ENCODE measurements at regions of chr16 and their contacts with region 1.

Region 1: DNA sequence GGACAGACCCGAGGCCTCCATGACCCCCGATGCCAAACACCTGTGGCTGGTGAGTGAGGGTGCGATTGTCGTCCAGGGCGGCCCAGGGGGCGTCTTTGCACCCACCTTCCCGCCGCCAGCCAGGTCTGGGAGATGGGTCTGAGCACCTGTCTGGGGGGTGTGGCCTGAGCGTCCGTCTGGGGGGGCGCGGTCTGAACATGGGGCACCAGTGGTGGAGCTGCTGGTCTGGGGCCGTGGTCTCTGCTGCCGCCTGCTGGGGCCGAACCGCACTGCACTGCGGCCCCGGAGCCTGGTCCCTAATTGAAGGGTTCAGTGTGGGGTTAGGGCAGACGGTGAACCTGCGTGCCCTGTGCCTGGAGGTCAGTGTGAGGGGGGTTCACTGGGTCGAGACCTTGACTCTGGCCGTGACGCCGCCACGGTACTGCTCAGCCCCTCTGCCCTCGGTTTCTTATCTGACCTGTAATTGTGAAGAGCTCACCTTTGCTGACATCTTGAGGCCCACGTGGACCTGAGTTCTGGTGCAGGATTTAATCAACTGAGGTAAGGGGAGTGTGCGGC is 12.6 kb upstream of the TCF25 start:
- DNase-seq: peak; percentile 65
- H3K4me3 ChIP-seq: no peak overlapping the region
- H3K27ac ChIP-seq: no peak overlapping the region
- H3K4me1 ChIP-seq: peaks cover 8% of the 10 kb centered on the region
- H3K27me3 ChIP-seq: no peaks in the 10 kb centered on the region
- CTCF ChIP-seq: peak; percentile 78

Region 2: GRCh38 chr16:89708441-89708931 is 152.3 kb before region 1 on chr16:
- intact Hi-C with region 1: loop called (anchors 5 kb)
- DNase-seq: peak; percentile 77
- H3K4me3 ChIP-seq: no peak overlapping the region
- H3K27ac ChIP-seq: no peak overlapping the region
- H3K4me1 ChIP-seq: peaks cover 5% of the 10 kb centered on the region
- H3K27me3 ChIP-seq: no peaks in the 10 kb centered on the region
- CTCF ChIP-seq: no peak

Region 3: DNA sequence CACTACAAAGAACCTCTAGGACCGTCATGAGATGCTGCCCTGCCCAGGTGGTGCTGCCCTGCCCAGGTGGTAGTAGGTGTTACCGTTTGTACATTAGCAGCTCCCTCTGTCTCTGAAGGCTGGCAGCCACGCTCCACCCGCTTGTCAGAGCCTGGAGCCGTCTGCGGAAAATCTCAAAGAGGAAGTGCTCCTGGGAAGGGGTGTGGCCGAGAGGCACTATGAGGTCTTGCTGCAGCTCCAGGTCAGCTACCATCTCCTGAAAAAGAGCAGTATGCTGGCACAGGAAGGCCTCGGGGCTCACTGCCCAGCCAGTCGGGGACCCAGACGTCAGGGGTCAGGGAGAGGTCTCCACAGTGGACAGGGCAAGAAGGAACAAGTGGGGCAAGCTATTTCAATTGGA is 111.2 kb before region 1 on chr16:
- intact Hi-C with region 1: loop called (anchors 5 kb)
- DNase-seq: peak; percentile 60
- H3K4me3 ChIP-seq: no peak overlapping the region
- H3K27ac ChIP-seq: no peak overlapping the region
- H3K4me1 ChIP-seq: no peaks in the 10 kb centered on the region
- H3K27me3 ChIP-seq: no peaks in the 10 kb centered on the region
- CTCF ChIP-seq: no peak

Region 4: DNA sequence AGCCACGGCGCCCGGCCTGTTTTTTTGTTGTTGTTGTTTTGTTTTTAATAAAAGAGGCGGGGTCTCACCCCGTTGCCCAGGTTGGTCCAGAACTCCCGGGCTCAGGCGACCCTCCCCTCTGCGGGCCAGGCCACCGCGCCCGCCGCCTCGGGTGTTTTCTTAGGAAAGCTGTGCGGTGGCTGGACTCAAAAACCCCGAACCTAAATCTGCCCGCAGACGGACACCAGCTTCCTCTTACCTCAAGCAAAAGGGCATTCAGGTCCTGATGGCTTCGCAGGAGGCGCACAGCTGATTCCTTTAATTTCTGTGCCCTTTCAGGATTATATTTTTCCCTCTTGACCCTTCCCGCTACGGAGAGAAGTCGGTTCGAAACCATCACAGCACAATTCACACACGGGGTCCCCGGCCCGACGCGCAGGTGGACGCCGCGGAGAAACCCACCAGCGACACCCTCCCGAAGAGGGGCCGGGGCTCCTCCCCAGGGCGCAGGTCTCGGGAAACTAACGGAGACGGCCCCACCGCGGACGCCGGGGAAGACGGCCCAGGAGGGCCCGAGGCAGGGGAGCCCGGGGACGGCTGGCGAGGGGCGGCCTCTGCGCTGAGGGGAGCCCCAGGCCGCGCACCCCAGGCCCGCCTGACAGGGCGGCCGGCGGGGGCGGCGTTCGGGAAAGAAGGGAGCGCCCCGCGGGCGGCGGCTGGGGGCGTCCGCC is 45.0 kb before region 1 on chr16:
- intact Hi-C with region 1: loop called (anchors 10 kb)
- DNase-seq: no peak
- H3K4me3 ChIP-seq: peak overlapping the region; percentile 53
- H3K27ac ChIP-seq: no peak overlapping the region
- H3K4me1 ChIP-seq: no peaks in the 10 kb centered on the region
- H3K27me3 ChIP-seq: no peaks in the 10 kb centered on the region
- CTCF ChIP-seq: no peak